Naive thymus-derived CD4-positive, alpha-beta T cell (primary cell): ENCODE measurements at regions of chr4 and their contacts with region 1.

Region 1: GRCh38 chr4:93791570-93792195 is 36.9 kb upstream of the ATOH1 start:
- DNase-seq: peak in 1 of 9 donors; percentile 22
- ATAC-seq: peak; percentile 40
- H3K4me3 ChIP-seq: no peak overlapping the region
- H3K4me3 Mint-ChIP-seq: no peak overlapping the region
- H3K27ac ChIP-seq: no peak overlapping the region
- H3K27ac Mint-ChIP-seq: no peak overlapping the region
- H3K4me1 ChIP-seq: no peaks in the 10 kb centered on the region
- H3K4me1 Mint-ChIP-seq: no peaks in the 10 kb centered on the region
- H3K27me3 ChIP-seq: no peaks in the 10 kb centered on the region
- H3K27me3 Mint-ChIP-seq: peaks cover 0 to 4% (median 0%) of the 10 kb centered on the region in 5 donors

Region 2: DNA sequence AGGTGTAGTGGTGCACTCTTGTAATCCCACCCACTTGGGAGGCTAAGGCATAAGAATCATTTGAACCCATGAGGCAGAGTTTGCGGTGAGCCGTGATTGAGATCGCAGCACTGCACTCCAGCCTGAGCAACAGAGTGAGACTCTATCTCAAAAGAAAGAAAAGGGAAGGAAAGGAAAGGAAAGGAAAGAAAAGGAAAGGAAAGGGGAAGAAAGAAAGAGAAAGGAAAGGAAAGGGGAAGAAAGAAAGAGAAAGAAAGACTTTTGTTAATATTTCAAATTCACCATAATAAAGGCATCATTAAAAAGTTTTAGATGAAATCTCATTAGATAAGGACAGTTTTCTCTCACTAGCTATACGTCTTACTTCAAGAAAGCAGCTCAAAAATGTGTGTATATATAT is 623.6 kb before region 1 on chr4:
- CTCF ChIA-PET with region 1: no interaction called
- POLR2A ChIA-PET with region 1: no interaction called
- intact Hi-C with region 1: no loop called
- DNase-seq: no peak
- ATAC-seq: no peak
- H3K4me3 ChIP-seq: no peak overlapping the region
- H3K4me3 Mint-ChIP-seq: no peak overlapping the region
- H3K27ac ChIP-seq: no peak overlapping the region
- H3K27ac Mint-ChIP-seq: no peak overlapping the region
- H3K4me1 ChIP-seq: no peaks in the 10 kb centered on the region
- H3K4me1 Mint-ChIP-seq: no peaks in the 10 kb centered on the region
- H3K27me3 ChIP-seq: no peaks in the 10 kb centered on the region
- H3K27me3 Mint-ChIP-seq: no peaks in the 10 kb centered on the region

Region 3: DNA sequence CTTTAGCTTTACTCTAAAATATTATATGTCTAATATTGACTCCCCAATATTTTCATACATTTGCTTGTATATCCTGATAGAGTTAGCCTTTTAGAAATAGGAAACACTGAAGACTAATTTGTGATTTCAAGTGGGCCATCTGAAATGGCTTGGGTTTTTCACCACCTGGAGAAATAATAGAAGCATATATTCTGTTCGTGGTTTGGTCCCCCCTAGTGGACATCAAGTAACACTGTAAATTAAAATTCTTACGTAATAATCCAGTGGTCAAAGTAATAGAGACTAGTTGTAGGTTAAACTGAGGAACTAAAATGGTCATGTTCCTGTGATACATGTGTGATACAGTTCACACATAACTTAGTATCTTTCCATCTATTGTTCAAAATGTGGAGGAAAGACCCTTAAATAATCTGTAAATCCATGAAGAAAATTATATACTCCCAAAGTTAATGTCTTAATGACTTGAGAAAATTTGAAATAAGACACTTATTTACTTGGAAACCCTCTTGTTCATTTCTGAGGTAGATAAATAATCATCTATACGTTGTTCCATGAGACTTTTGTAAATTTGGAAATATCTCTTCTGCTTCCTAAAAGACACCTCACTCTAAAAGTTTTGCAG is 336.1 kb after region 1 on chr4:
- CTCF ChIA-PET with region 1: no interaction called
- POLR2A ChIA-PET with region 1: no interaction called
- intact Hi-C with region 1: loop called in 1 of 2 experiments (anchors 2 kb)
- DNase-seq: no peak
- ATAC-seq: no peak
- H3K4me3 ChIP-seq: no peak overlapping the region
- H3K4me3 Mint-ChIP-seq: no peak overlapping the region
- H3K27ac ChIP-seq: no peak overlapping the region
- H3K27ac Mint-ChIP-seq: no peak overlapping the region
- H3K4me1 ChIP-seq: no peaks in the 10 kb centered on the region
- H3K4me1 Mint-ChIP-seq: no peaks in the 10 kb centered on the region
- H3K27me3 ChIP-seq: no peaks in the 10 kb centered on the region
- H3K27me3 Mint-ChIP-seq: peaks cover 0 to 8% (median 2%) of the 10 kb centered on the region in 5 donors

Region 4: GRCh38 chr4:94256828-94257227 is 465.1 kb after region 1 on chr4:
- CTCF ChIA-PET with region 1: no interaction called
- POLR2A ChIA-PET with region 1: no interaction called
- intact Hi-C with region 1: loop called (anchors 5 kb)
- DNase-seq: peak in 1 of 9 donors; percentile 1
- ATAC-seq: no peak
- H3K4me3 ChIP-seq: no peak overlapping the region
- H3K4me3 Mint-ChIP-seq: no peak overlapping the region
- H3K27ac ChIP-seq: no peak overlapping the region
- H3K27ac Mint-ChIP-seq: peak overlapping the region in 1 of 9 donors; percentile 15
- H3K4me1 ChIP-seq: no peaks in the 10 kb centered on the region
- H3K4me1 Mint-ChIP-seq: peaks cover 0 to 9% (median under 1%) of the 10 kb centered on the region in 7 donors
- H3K27me3 ChIP-seq: no peaks in the 10 kb centered on the region
- H3K27me3 Mint-ChIP-seq: no peaks in the 10 kb centered on the region

Region 5: GRCh38 chr4:94390804-94391410 is 599.2 kb after region 1 on chr4:
- CTCF ChIA-PET with region 1: no interaction called
- POLR2A ChIA-PET with region 1: no interaction called
- intact Hi-C with region 1: loop called in 1 of 2 experiments (anchors 1 kb)
- DNase-seq: peak in 4 of 9 donors; percentile 6 to 32 (median 11)
- ATAC-seq: no peak
- H3K4me3 ChIP-seq: no peak overlapping the region
- H3K4me3 Mint-ChIP-seq: no peak overlapping the region
- H3K27ac ChIP-seq: no peak overlapping the region
- H3K27ac Mint-ChIP-seq: no peak overlapping the region
- H3K4me1 ChIP-seq: no peaks in the 10 kb centered on the region
- H3K4me1 Mint-ChIP-seq: peaks cover 0 to 3% (median 0%) of the 10 kb centered on the region in 7 donors
- H3K27me3 ChIP-seq: no peaks in the 10 kb centered on the region
- H3K27me3 Mint-ChIP-seq: peaks cover 0 to 15% (median 6%) of the 10 kb centered on the region in 5 donors

Region 6: GRCh38 chr4:94595879-94596483 is 804.3 kb after region 1 on chr4:
- CTCF ChIA-PET with region 1: no interaction called
- POLR2A ChIA-PET with region 1: no interaction called
- intact Hi-C with region 1: loop called (anchors 2 to 5 kb)
- DNase-seq: peak in 5 of 9 donors; percentile 26 to 41 (median 31)
- ATAC-seq: peak; percentile 65
- H3K4me3 ChIP-seq: no peak overlapping the region
- H3K4me3 Mint-ChIP-seq: no peak overlapping the region
- H3K27ac ChIP-seq: no peak overlapping the region
- H3K27ac Mint-ChIP-seq: no peak overlapping the region
- H3K4me1 ChIP-seq: no peaks in the 10 kb centered on the region
- H3K4me1 Mint-ChIP-seq: no peaks in the 10 kb centered on the region
- H3K27me3 ChIP-seq: no peaks in the 10 kb centered on the region
- H3K27me3 Mint-ChIP-seq: no peaks in the 10 kb centered on the region